H1 (cell line): ENCODE measurements at regions of chr7 and their contacts with region 1.

Region 1: DNA sequence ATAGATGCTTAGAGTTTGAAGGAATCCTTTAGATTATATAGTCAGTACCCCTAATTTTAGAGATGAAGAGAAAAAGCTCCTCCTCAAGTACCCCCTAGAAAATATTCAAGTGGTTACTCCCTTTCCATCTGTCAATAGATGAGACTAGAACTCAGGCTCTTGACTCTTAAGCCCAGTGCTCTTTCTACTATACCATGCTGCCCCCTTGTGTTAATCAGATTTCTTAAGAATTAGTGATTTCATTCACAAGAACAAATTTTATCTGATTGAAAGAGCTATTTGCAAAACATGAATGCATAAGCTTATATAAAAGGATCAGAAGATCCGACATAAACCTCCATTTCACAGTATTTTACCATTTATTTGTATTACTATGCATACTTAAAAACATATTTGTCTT is 179.3 kb downstream of the TFEC start:
- DNase-seq: no peak
- H3K4me3 ChIP-seq: no peak overlapping the region
- H3K27ac ChIP-seq: no peak overlapping the region
- H3K4me1 ChIP-seq: no peaks in the 10 kb centered on the region
- H3K27me3 ChIP-seq: no peaks in the 10 kb centered on the region
- CTCF ChIP-seq: peak in 2 of 3 experiments; percentile 36 to 39; a peak in 2 of 4 replicates
- EP300 ChIP-seq: no peak
- POLR2A ChIP-seq: no peak
- RAD21 ChIP-seq: peak; percentile 84 to 85

Region 2: DNA sequence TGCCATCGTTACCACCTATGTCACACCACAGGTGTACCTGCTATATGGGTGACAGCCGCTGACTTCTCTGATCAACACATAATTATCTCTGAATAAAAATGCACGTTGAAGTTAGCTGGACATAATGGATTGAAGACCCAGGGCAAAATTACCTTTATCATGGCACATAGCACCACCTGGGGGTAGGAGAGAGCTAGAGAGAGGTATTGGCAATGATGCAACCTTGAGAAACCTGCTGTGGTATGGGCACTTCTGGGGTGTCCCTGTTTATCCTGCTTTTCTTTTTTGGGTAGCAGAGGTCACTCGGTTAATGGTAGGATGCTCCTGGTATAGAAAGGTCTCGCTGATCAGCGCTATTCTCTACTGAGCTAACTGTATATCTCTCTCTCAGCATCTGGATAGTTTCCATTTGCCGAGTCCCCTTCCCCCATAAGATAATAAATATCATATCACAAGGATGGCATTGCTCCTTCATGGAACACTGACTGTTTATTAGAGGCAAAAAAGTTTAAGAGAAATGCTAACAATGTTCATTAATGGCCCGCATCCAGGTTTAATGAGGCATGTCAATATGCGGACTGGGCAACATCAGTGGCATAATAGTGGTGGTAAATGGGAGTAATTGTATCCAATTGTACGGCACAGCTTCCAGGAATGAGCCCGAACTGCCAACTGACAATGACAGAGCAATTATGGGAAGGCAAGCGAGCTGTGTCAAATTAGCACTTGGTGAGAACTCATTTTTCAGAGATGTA is 143.9 kb before region 1 on chr7:
- CTCF ChIA-PET with region 1: interaction called, 16 read pairs
- POLR2A ChIA-PET with region 1: no interaction called
- DNase-seq: peak in 1 of 2 experiments; percentile 1
- H3K4me3 ChIP-seq: no peak overlapping the region
- H3K27ac ChIP-seq: no peak overlapping the region
- H3K4me1 ChIP-seq: no peaks in the 10 kb centered on the region
- H3K27me3 ChIP-seq: no peaks in the 10 kb centered on the region
- CTCF ChIP-seq: peak in 2 of 3 experiments; percentile 52 to 53; a peak in 3 of 4 replicates
- EP300 ChIP-seq: no peak; a peak in 1 of 3 replicates
- POLR2A ChIP-seq: no peak
- RAD21 ChIP-seq: peak; percentile 73 to 83

Region 3: DNA sequence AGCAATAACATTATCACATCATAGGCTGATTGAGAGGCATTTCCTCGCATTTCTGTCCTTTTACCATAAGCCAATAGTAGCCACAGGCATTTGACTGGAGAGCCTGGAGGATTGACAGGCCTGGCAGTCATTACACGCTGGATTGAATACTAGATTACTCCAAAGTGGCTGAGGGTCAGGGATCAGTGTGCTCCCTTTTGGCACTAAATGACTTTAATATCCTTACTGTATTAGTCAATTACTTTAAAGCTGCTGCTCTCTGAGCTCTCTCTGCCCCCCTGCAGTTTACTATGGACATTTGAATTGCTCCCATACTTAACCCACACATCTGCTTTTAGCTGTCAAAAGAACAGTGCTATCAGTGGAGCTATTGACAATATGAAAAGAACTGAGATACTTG is 122.8 kb before region 1 on chr7:
- CTCF ChIA-PET with region 1: interaction called, 15 read pairs
- POLR2A ChIA-PET with region 1: no interaction called
- DNase-seq: no peak
- H3K4me3 ChIP-seq: no peak overlapping the region
- H3K27ac ChIP-seq: no peak overlapping the region
- H3K4me1 ChIP-seq: peaks cover 0 to 3% (median 0%) of the 10 kb centered on the region in 4 experiments; a peak in 1 of 7 replicates
- H3K27me3 ChIP-seq: no peaks in the 10 kb centered on the region
- CTCF ChIP-seq: no peak
- EP300 ChIP-seq: no peak
- POLR2A ChIP-seq: no peak
- RAD21 ChIP-seq: no peak

Region 4: DNA sequence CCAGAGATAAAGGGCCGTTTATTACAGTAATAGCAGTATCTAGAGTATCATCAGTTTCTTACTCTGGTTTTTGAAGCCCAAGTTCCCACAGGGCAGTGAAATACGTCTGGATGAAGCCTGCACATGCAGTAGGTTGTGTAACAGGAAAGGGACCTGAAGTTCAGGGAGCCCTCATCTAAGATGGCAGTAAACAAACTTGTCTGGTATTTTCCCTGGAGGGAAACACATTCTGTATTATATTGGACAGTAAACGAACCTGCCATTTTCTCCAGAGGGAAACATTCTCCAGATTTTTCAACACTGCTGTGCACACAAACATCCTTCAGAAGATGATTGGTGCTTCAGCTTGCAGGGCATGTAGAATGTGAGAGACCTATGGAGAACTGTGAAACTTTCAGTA is 10.6 kb before region 1 on chr7:
- CTCF ChIA-PET with region 1: interaction called, 12 read pairs
- POLR2A ChIA-PET with region 1: no interaction called
- DNase-seq: no peak
- H3K4me3 ChIP-seq: no peak overlapping the region
- H3K27ac ChIP-seq: no peak overlapping the region
- H3K4me1 ChIP-seq: no peaks in the 10 kb centered on the region
- H3K27me3 ChIP-seq: no peaks in the 10 kb centered on the region
- CTCF ChIP-seq: no peak
- EP300 ChIP-seq: no peak
- POLR2A ChIP-seq: no peak
- RAD21 ChIP-seq: no peak

Region 5: DNA sequence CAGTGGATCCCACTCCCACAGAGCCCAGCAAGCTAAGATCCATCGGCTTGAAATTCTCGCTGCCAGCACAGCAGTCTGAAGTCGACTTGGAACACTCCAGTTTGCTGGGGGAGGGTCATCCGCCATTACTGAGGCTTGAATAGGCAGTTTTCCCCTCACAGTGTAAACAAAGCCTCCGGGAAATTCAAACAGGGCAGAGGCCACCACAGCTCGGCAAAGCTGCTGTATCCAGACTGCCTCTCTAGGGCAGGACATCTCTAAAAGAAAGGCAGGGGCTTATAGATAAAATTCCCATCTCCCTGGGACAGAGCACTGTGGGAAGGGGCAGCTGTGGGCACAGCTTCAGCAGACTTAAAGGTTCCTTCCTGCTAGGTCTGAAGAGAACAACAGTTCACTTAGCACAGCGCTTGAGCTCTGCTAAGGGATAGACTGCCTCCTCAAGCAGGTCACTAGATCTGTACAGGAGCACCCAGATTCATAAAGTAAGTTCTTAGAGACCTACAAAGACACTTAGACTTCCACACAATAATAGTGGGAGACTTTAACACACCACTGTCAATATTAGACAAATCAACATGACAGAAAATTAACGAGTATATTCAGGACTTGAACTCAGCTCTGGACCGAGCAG is 38.2 kb after region 1 on chr7:
- CTCF ChIA-PET with region 1: no interaction called
- POLR2A ChIA-PET with region 1: no interaction called
- DNase-seq: no peak
- H3K4me3 ChIP-seq: no peak overlapping the region
- H3K27ac ChIP-seq: no peak overlapping the region
- H3K4me1 ChIP-seq: no peaks in the 10 kb centered on the region
- H3K27me3 ChIP-seq: no peaks in the 10 kb centered on the region
- CTCF ChIP-seq: no peak
- EP300 ChIP-seq: no peak
- POLR2A ChIP-seq: no peak
- RAD21 ChIP-seq: no peak

Region 6: DNA sequence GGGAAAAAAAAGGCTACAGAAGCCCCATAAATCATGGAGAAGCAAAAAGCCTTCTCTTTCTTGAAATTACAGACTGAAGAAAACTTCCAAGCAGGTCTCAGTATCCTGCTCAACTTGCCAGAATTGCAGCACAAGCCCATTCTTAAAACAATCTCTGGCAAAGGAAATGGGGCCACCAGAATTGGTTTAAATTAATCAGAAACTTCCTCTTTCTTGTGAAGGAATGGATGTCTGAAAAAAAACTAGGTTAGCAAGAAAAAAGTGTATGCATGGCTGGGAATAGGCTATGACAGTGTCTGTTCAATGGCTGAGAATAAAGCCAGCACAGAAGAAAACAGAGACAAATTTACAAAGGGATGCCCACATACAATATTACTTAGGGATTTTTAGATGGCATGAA is 120.2 kb after region 1 on chr7:
- CTCF ChIA-PET with region 1: no interaction called
- POLR2A ChIA-PET with region 1: no interaction called
- DNase-seq: no peak
- H3K4me3 ChIP-seq: no peak overlapping the region
- H3K27ac ChIP-seq: no peak overlapping the region
- H3K4me1 ChIP-seq: no peaks in the 10 kb centered on the region
- H3K27me3 ChIP-seq: no peaks in the 10 kb centered on the region
- CTCF ChIP-seq: no peak
- EP300 ChIP-seq: no peak
- POLR2A ChIP-seq: no peak
- RAD21 ChIP-seq: no peak